Left ventricle myocardium inferior (tissue), 1 donor: ENCODE measurements at regions of chr10 and their contacts with region 1.

Region 1: GRCh38 chr10:13440185-13441061 is 88.4 kb downstream of the BEND7 start:
- DNase-seq: peak; percentile 25
- H3K4me3 ChIP-seq: peak overlapping the region; percentile 56
- H3K27ac ChIP-seq: no peak overlapping the region
- H3K4me1 ChIP-seq: peaks cover 14% of the 10 kb centered on the region
- H3K27me3 ChIP-seq: peaks cover 62% of the 10 kb centered on the region
- CTCF ChIP-seq: peak; percentile 88

Region 2: GRCh38 chr10:13348216-13349017 is 92.0 kb before region 1 on chr10 and contains the start of gene SEPHS1:
- intact Hi-C with region 1: no loop called
- DNase-seq: peak; percentile 75
- H3K4me3 ChIP-seq: peak within 1 kb of the TSS; percentile 74
- H3K27ac ChIP-seq: peak within 1 kb of the TSS; percentile 98
- H3K4me1 ChIP-seq: peaks cover 50% of the 10 kb centered on the region
- H3K27me3 ChIP-seq: peaks cover 24% of the 10 kb centered on the region
- CTCF ChIP-seq: peak; percentile 26
- total RNA-seq, gene SEPHS1: 26.0 TPM

Region 3: DNA sequence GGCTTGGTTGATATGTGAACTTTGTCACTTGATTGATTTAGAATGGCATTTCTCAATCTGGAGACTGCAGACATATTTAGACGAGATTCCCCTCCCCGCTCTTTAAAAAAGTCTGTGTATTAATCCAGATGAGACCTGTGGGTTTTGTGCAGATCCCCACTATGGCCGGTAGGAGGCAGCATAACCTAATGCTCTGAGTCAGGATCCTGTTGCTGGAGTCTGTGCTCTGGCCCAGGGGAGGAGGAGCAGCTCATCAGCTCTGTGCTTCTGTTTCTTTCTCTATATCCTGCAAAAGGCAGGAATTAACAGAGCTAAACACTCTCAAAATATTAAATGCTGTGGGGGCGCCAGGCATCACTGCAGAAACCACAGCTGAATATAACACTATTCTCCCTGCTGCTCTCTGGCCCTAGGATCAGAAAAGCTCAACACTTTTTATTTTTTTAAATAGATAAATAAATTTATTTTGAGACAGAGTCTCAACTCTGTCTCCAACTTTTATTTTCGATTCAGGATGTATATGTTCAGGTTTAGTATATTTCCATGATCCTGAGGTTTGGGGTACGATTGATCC is 68.4 kb before region 1 on chr10:
- intact Hi-C with region 1: loop called (anchors 5 kb)
- DNase-seq: peak; percentile 40
- H3K4me3 ChIP-seq: no peak overlapping the region
- H3K27ac ChIP-seq: no peak overlapping the region
- H3K4me1 ChIP-seq: no peaks in the 10 kb centered on the region
- H3K27me3 ChIP-seq: peaks cover 6% of the 10 kb centered on the region
- CTCF ChIP-seq: peak; percentile 92

Region 4: DNA sequence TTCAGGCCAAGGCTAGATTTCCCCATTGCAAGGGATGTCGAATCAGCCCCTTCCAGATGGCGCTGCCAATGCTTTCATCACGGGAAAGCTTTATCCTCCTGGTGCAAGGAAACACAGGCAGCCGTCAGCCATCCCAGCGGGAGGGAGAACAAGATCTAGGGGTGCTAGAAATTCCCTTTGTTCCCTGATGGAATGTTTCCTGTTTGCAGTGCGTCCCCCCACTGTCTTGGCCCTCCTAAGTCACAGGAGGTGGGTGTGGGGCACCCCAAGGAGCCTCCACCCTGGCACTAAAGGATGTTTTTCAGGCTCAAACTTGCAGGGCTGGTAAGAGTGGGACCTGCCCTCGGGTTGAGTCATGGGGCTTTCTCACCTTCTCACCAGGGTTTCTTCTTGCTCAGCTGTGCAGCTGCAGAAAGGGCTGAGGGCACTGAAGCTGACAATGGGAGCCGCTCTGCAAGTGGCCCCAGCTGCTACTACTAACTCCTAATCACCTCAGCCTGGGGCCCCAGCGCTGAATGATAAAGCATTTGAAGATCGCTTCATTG is 249.9 kb after region 1 on chr10:
- intact Hi-C with region 1: no loop called
- DNase-seq: no peak
- H3K4me3 ChIP-seq: no peak overlapping the region
- H3K27ac ChIP-seq: peak overlapping the region; percentile 51
- H3K4me1 ChIP-seq: peaks cover 68% of the 10 kb centered on the region
- H3K27me3 ChIP-seq: no peaks in the 10 kb centered on the region
- CTCF ChIP-seq: no peak